ENCODE measurements at regions of chr10 and their contacts with region 1.

Region 1: GRCh38 chr10:23438550-23439441 is at the start of gene OTUD1:
- H3K4me3 Mint-ChIP-seq: peak within 1 kb of the TSS; percentile 86
- H3K27ac Mint-ChIP-seq: peak within 1 kb of the TSS; percentile 93
- H3K4me1 Mint-ChIP-seq: peaks cover 62% of the 10 kb centered on the region
- H3K27me3 Mint-ChIP-seq: no peaks in the 10 kb centered on the region

Region 2: GRCh38 chr10:23325132-23325531 is 113.7 kb before region 1 on chr10:
- intact Hi-C with region 1: loop called (anchors 10 kb)
- H3K4me3 Mint-ChIP-seq: no peak overlapping the region
- H3K27ac Mint-ChIP-seq: no peak overlapping the region
- H3K4me1 Mint-ChIP-seq: no peaks in the 10 kb centered on the region
- H3K27me3 Mint-ChIP-seq: peaks cover 16% of the 10 kb centered on the region

Region 3: DNA sequence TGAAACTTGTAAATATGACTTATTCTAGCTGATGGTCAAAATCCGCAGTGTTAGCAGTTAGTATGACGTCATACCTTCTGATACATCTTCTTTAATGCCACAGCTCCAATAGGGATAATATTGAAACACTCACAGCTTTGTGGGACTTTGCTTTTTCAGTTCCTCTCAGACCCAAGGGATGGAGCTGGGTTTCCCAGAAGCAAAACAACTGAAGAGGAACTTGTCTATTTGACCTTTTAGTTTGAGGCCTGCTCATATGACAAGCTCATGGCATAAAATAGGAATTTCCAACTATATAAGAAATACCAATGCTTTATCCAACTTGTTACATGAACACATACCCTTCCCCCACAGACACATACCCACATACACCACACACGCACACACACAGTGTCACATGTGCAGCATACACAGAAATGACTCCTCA is 62.6 kb before region 1 on chr10:
- intact Hi-C with region 1: loop called (anchors 2 kb)
- H3K4me3 Mint-ChIP-seq: no peak overlapping the region
- H3K27ac Mint-ChIP-seq: peak overlapping the region; percentile 84
- H3K4me1 Mint-ChIP-seq: peaks cover 45% of the 10 kb centered on the region
- H3K27me3 Mint-ChIP-seq: peaks cover 7% of the 10 kb centered on the region

Region 4: DNA sequence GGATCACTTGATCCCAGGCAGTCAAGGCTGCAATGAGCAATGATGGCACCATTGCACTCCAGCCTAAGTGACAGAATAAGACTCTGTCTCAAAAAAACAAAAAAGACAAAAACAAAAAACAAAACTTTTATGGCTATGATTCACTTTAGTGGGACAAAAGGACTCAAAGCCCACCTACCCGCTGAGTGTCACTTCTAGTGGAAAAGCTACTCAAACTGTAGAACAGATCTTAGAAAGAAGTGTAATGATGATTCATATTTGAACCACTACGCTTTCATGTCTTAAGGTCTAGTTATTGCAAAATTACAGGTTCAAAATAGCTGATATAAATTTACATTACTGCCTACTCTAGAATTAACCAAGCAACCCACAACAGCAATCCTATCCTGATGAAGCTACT is 47.0 kb before region 1 on chr10:
- intact Hi-C with region 1: no loop called
- H3K4me3 Mint-ChIP-seq: no peak overlapping the region
- H3K27ac Mint-ChIP-seq: no peak overlapping the region
- H3K4me1 Mint-ChIP-seq: peaks cover 18% of the 10 kb centered on the region
- H3K27me3 Mint-ChIP-seq: peaks cover 2% of the 10 kb centered on the region

Region 5: DNA sequence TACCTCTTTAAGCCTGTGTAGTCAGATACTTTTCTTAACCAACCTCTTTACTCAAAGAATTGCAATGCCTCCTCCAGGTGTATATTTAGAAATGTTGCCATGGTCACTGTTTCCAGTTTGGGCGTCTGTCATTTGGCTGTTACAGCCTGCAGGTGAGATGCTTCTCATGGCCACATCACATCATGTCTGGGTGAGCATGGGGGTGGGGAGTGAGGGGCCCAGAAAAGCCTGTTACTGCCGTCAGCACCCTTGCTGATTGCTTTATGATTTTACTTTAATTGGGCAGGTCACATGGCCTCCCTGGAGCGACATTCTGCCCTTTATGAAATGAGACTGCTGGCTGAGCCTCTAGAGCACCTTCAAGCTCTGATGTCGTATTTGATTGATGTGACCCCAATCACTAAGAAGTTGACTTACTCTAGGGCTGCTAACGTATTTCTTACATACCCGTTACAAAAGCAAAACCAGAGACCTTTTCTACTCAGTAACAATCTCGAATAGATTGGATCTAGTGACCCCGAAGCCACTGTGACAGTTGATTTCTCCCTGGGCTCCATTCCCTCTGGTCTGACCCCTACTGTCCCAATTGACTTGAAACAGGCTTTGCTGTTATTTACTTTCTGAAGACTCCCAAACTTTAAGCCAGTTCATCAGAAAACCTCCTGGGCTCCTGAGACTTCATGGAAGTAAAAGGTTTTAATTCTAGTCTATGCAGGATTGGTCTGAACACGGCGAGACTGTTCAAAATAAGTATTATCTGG is 60.8 kb after region 1 on chr10:
- intact Hi-C with region 1: no loop called
- H3K4me3 Mint-ChIP-seq: no peak overlapping the region
- H3K27ac Mint-ChIP-seq: no peak overlapping the region
- H3K4me1 Mint-ChIP-seq: no peaks in the 10 kb centered on the region
- H3K27me3 Mint-ChIP-seq: peaks cover 13% of the 10 kb centered on the region

Region 6: GRCh38 chr10:23643111-23643780 is 204.4 kb after region 1 on chr10:
- intact Hi-C with region 1: loop called (anchors 10 kb)
- H3K4me3 Mint-ChIP-seq: peak overlapping the region; percentile 28
- H3K27ac Mint-ChIP-seq: peak overlapping the region; percentile 82
- H3K4me1 Mint-ChIP-seq: peaks cover 10% of the 10 kb centered on the region
- H3K27me3 Mint-ChIP-seq: peaks cover 7% of the 10 kb centered on the region

Measured in dendritic cell treated with granulocyte-macrophage colony-stimulating factor and Interleukin-4, amounts not matched to agents 40 ng/mL and 50 ng/mL, for 4 days (primary cell).